ENCODE measurements at regions of chr5 and their contacts with region 1.

Region 1: GRCh38 chr5:62779010-62779422 is 200.4 kb downstream of the LRRC70 start:
- DNase-seq: peak; percentile 35
- ATAC-seq: no peak
- H3K4me3 ChIP-seq: no peak overlapping the region
- H3K4me3 Mint-ChIP-seq: no peak overlapping the region
- H3K27ac ChIP-seq: no peak overlapping the region
- H3K27ac Mint-ChIP-seq: no peak overlapping the region
- H3K4me1 ChIP-seq: no peaks in the 10 kb centered on the region
- H3K4me1 Mint-ChIP-seq: peaks cover 4% of the 10 kb centered on the region
- H3K27me3 ChIP-seq: no peaks in the 10 kb centered on the region
- H3K27me3 Mint-ChIP-seq: no peaks in the 10 kb centered on the region
- CTCF ChIP-seq: peak; percentile 74

Region 2: DNA sequence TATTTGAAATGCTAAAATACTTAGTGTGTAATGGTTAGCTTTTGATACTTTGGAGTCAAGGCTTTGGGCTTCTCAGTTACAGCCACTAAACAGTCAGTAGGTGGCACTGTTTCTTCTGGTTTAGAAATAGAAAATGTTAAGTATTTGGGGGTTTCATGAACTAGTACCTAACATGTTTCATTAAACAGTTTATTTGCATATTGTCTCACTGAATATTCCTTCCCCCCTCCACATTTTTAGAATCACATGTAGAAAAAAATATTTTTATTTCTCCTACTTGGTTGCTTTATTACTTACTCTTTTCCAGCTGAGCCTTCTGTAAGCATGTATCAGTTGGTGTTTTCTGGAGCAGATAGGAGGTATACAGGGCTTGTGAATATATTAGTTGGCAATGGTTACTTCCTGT is 318.4 kb before region 1 on chr5:
- CTCF ChIA-PET with region 1: interaction called, 11 read pairs
- POLR2A ChIA-PET with region 1: no interaction called
- intact Hi-C with region 1: loop called (anchors 1 kb)
- DNase-seq: peak; percentile 45
- ATAC-seq: no peak
- H3K4me3 ChIP-seq: no peak overlapping the region
- H3K4me3 Mint-ChIP-seq: no peak overlapping the region
- H3K27ac ChIP-seq: no peak overlapping the region
- H3K27ac Mint-ChIP-seq: no peak overlapping the region
- H3K4me1 ChIP-seq: no peaks in the 10 kb centered on the region
- H3K4me1 Mint-ChIP-seq: no peaks in the 10 kb centered on the region
- H3K27me3 ChIP-seq: no peaks in the 10 kb centered on the region
- H3K27me3 Mint-ChIP-seq: no peaks in the 10 kb centered on the region
- CTCF ChIP-seq: peak; percentile 83

Region 3: GRCh38 chr5:62538017-62538942 is 240.7 kb before region 1 on chr5:
- CTCF ChIA-PET with region 1: no interaction called
- POLR2A ChIA-PET with region 1: no interaction called
- intact Hi-C with region 1: no loop called
- DNase-seq: no peak
- ATAC-seq: no peak
- H3K4me3 ChIP-seq: no peak overlapping the region
- H3K4me3 Mint-ChIP-seq: no peak overlapping the region
- H3K27ac ChIP-seq: no peak overlapping the region
- H3K27ac Mint-ChIP-seq: no peak overlapping the region
- H3K4me1 ChIP-seq: no peaks in the 10 kb centered on the region
- H3K4me1 Mint-ChIP-seq: no peaks in the 10 kb centered on the region
- H3K27me3 ChIP-seq: no peaks in the 10 kb centered on the region
- H3K27me3 Mint-ChIP-seq: no peaks in the 10 kb centered on the region
- CTCF ChIP-seq: no peak

Region 4: DNA sequence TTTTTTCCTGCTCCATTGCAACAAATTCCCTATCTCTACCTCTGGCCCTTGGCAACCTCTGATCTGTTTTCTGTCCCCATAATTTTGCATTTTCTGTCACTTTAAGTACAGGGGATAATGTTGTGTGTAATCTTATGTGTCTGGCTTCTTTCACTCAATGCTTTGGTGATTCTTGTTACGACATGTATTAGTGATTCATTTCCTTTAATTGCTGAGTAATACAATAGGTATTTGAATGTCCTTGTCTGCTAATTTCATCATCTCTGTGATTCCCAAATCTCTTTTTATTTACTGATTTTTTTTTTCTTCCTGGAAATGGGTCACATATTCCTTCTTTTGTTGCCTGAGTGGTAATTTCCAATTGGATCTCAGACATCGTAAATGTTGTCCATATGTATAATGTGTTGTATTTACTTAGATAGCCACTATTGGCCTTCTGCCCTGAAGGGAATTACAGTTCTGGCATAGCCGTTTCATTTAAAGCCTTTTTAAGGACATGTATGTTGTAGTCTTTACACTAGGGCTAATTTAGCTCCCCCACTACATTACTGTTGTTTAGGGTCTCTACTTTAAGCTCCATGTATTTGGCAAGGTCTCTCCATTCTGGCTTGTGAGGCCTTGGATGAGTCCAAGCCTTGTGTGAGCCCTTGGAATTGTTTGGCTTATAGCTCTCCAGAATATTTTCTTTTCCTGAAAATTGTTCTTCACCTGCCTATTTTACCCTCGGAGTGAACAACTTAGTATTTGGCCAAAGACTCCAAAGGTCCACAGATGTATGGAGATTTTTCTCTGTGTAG is 483.4 kb after region 1 on chr5:
- CTCF ChIA-PET with region 1: no interaction called
- POLR2A ChIA-PET with region 1: no interaction called
- intact Hi-C with region 1: no loop called
- DNase-seq: no peak
- ATAC-seq: no peak
- H3K4me3 ChIP-seq: no peak overlapping the region
- H3K4me3 Mint-ChIP-seq: no peak overlapping the region
- H3K27ac ChIP-seq: no peak overlapping the region
- H3K27ac Mint-ChIP-seq: no peak overlapping the region
- H3K4me1 ChIP-seq: no peaks in the 10 kb centered on the region
- H3K4me1 Mint-ChIP-seq: no peaks in the 10 kb centered on the region
- H3K27me3 ChIP-seq: no peaks in the 10 kb centered on the region
- H3K27me3 Mint-ChIP-seq: no peaks in the 10 kb centered on the region
- CTCF ChIP-seq: no peak

Region 5: GRCh38 chr5:63981864-63982263 is 1202.8 kb after region 1 on chr5:
- CTCF ChIA-PET with region 1: no interaction called
- POLR2A ChIA-PET with region 1: no interaction called
- intact Hi-C with region 1: no loop called
- DNase-seq: no peak
- ATAC-seq: no peak
- H3K4me3 ChIP-seq: no peak overlapping the region
- H3K4me3 Mint-ChIP-seq: no peak overlapping the region
- H3K27ac ChIP-seq: no peak overlapping the region
- H3K27ac Mint-ChIP-seq: no peak overlapping the region
- H3K4me1 ChIP-seq: no peaks in the 10 kb centered on the region
- H3K4me1 Mint-ChIP-seq: no peaks in the 10 kb centered on the region
- H3K27me3 ChIP-seq: no peaks in the 10 kb centered on the region
- H3K27me3 Mint-ChIP-seq: no peaks in the 10 kb centered on the region
- CTCF ChIP-seq: no peak